ENCODE measurements at regions of chr17 and their contacts with region 1.

Region 1: GRCh38 chr17:77451245-77451893 is 310.6 kb downstream of the SEC14L1 start:
- DNase-seq: peak; percentile 65
- ATAC-seq: peak; percentile 59
- H3K4me3 Mint-ChIP-seq: peak overlapping the region; percentile 95
- H3K27ac Mint-ChIP-seq: peak overlapping the region; percentile 99
- H3K4me1 Mint-ChIP-seq: peaks cover 82% of the 10 kb centered on the region
- H3K27me3 Mint-ChIP-seq: no peaks in the 10 kb centered on the region
- CTCF ChIP-seq: no peak

Region 2: GRCh38 chr17:77465358-77466041 is 14.1 kb after region 1 on chr17:
- CTCF ChIA-PET with region 1: interaction called, 5 read pairs
- POLR2A ChIA-PET with region 1: interaction called, 831 read pairs
- intact Hi-C with region 1: loop called (anchors 1 kb)
- DNase-seq: peak; percentile 62
- ATAC-seq: peak; percentile 81
- H3K4me3 Mint-ChIP-seq: peak overlapping the region; percentile 75
- H3K27ac Mint-ChIP-seq: peak overlapping the region; percentile 93
- H3K4me1 Mint-ChIP-seq: peaks cover 94% of the 10 kb centered on the region
- H3K27me3 Mint-ChIP-seq: no peaks in the 10 kb centered on the region
- CTCF ChIP-seq: no peak

Region 3: DNA sequence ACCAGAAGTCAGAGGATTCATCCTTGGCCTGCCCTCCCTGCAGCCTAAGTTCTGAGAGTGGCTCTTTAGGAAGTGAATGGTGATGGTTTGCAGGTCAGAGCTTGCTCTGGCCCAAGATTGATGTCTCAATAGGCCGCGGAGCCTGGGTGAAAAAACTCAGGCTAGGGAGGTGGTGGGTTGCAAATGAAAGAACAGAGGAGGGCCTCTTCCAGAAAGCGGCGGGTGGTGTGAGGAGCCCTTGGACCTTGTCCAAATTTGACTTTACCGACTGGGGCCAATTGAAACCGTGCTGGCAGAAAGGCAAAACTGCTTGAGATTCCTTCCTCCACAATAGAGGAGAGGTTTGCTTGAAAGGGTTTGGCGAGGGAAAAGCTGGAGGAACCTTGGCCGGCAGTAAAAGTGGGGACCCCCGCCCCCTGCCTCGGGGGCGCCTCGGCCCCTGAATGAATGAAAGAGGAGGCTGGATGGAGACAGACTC is 20.7 kb after region 1 on chr17:
- CTCF ChIA-PET with region 1: interaction called, 4 read pairs
- POLR2A ChIA-PET with region 1: interaction called, 831 read pairs
- intact Hi-C with region 1: no loop called
- DNase-seq: no peak
- ATAC-seq: no peak
- H3K4me3 Mint-ChIP-seq: peak overlapping the region; percentile 72
- H3K27ac Mint-ChIP-seq: peak overlapping the region; percentile 84
- H3K4me1 Mint-ChIP-seq: peaks cover 97% of the 10 kb centered on the region
- H3K27me3 Mint-ChIP-seq: no peaks in the 10 kb centered on the region
- CTCF ChIP-seq: no peak

Region 4: DNA sequence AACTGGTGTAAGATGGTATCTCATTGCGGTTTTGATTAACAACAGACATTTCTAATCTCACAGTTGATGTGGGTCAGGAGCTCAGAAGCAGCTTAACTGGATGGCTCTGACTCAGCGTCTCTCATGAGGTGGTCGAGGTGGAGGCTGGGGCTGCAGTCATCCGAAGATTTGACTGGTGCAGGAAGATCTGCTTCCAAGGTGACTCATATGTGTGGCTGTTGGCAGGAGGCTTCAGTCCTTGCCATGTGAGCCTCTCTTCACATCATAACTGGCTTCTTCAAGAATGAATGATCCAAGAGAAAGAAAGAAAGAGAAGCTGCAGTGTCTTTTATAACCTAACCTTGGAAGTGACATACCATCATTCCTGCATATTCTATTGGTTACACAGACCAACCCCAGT is 65.5 kb after region 1 on chr17:
- CTCF ChIA-PET with region 1: no interaction called
- POLR2A ChIA-PET with region 1: no interaction called
- intact Hi-C with region 1: no loop called
- DNase-seq: no peak
- ATAC-seq: no peak
- H3K4me3 Mint-ChIP-seq: no peak overlapping the region
- H3K27ac Mint-ChIP-seq: no peak overlapping the region
- H3K4me1 Mint-ChIP-seq: no peaks in the 10 kb centered on the region
- H3K27me3 Mint-ChIP-seq: no peaks in the 10 kb centered on the region
- CTCF ChIP-seq: no peak